A673 (cell line): ENCODE measurements at regions of chr5 and their contacts with region 1.

Region 1: GRCh38 chr5:116032991-116033390 is 719 bp downstream of the ARL14EPL start:
- DNase-seq: no peak
- H3K4me3 ChIP-seq: no peak overlapping the region
- H3K27ac ChIP-seq: no peak overlapping the region
- H3K4me1 ChIP-seq: no peaks in the 10 kb centered on the region
- H3K27me3 ChIP-seq: no peaks in the 10 kb centered on the region
- CTCF ChIP-seq: no peak

Region 2: GRCh38 chr5:114830114-114830513 is 1202.9 kb before region 1 on chr5:
- CTCF ChIA-PET with region 1: no interaction called
- POLR2A ChIA-PET with region 1: no interaction called
- intact Hi-C with region 1: no loop called
- DNase-seq: no peak
- H3K4me3 ChIP-seq: no peak overlapping the region
- H3K27ac ChIP-seq: no peak overlapping the region
- H3K4me1 ChIP-seq: no peaks in the 10 kb centered on the region
- H3K27me3 ChIP-seq: no peaks in the 10 kb centered on the region
- CTCF ChIP-seq: no peak

Region 3: DNA sequence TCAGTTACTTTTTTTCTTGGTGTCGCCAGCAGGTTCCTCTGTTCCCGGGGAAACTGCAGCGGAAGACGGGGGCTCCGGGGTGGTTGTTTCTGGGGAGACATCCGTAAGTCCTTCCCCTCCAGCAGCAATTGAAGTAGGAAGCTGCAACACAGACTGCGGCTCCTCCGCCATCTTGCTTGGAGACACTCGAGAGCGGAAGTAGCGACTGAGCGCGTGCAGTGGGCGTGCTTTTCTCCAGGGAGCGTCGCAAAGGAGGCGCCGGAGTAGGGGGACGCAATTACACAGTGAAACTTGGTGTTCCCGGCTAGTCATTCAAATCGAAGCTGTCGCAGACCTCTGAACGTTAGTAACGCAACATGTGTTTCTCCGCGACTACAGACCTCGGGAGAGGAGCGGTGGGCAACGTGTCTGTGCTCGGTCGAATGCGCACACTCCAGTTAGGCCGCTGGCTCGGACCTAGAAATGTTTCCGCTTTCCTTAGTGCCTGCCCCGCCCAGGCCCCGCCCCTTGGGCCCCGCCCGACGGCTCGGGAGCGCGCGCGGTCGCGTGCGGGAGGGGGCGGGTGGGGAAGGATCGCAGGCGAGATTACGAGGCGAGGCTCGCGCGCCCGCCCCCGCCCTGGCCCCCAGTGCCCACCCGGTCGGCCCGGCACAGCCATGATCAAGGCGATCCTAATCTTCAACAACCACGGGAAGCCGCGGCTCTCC is 191.5 kb before region 1 on chr5 and contains the starts of genes AP3S1 and ATG12:
- CTCF ChIA-PET with region 1: no interaction called
- POLR2A ChIA-PET with region 1: interaction called, 13 read pairs
- intact Hi-C with region 1: no loop called
- DNase-seq: peak; percentile 97
- H3K4me3 ChIP-seq: peak within 1 kb of the TSS; percentile 80
- H3K27ac ChIP-seq: peak within 1 kb of the TSS; percentile 89
- H3K4me1 ChIP-seq: peaks cover 22% of the 10 kb centered on the region
- H3K27me3 ChIP-seq: no peaks in the 10 kb centered on the region
- CTCF ChIP-seq: no peak
- total RNA-seq, gene AP3S1: 66.9 and 71.8 TPM in 2 replicates
- total RNA-seq, gene ATG12: 55.8 and 59.6 TPM in 2 replicates